B cell (primary cell): ENCODE measurements at regions of chr3 and their contacts with region 1.

Region 1: DNA sequence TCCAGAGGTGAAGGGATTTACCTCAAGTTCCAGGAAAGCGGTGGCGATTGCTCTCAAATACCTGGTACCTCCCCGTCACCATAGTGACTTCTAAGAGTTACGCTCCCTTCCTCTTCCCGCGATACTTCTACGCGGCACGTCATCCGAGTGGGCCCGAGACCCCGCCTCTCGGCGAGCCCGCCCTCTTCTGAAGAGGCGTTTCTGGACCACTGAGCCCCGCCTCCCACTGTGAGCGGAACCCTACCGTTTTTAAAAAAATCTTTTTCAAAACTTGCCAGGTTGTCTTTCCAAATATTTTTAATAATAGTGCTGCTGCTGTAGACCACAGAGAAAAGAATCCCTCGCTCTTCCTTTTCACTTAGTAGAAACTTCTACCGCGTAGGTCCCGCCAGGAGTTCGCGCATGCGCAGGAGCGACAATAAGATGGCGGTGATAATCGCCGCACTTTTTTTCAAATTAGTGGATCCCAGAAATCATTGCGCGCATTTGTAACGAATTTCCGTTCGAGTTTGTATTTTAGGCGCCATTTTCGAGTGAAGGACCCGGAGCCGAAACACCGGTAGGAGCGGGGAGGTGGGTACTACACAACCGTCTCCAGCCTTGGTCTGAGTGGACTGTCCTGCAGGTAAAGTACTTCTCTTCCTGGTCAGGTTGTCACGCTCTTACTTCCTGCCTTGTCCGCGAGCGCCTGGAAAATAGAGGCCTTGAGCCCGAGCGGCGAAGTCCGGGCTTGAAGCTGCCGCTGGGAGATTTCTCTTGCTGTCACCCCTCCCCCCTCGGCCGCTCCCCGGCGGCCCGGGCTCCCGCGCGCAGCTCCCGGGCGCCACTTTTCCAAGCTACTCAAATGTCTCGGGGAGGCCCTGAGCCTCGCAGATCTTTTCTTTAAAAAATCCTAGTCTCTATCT is at the starts of genes IFT80 and SMC4:
- DNase-seq: peak; percentile 97
- ATAC-seq: peak; percentile 96
- H3K4me3 ChIP-seq: peak within 1 kb of the TSS; percentile 71 to 97 (median 85)
- H3K4me3 Mint-ChIP-seq: peak within 1 kb of the TSS; percentile 98
- H3K27ac ChIP-seq: peak within 1 kb of the TSS; percentile 69 to 97
- H3K27ac Mint-ChIP-seq: peak within 1 kb of the TSS; percentile 98
- H3K4me1 ChIP-seq: peaks cover 26 to 45% of the 10 kb centered on the region in 2 donors
- H3K4me1 Mint-ChIP-seq: peaks cover 43% of the 10 kb centered on the region
- H3K27me3 ChIP-seq: peaks cover 0 to 25% (median 7%) of the 10 kb centered on the region in 4 experiments
- H3K27me3 Mint-ChIP-seq: no peaks in the 10 kb centered on the region
- CTCF ChIP-seq: no peak
- total RNA-seq, gene IFT80: 44.1 and 47.0 TPM in 2 replicates
- total RNA-seq, gene SMC4: 53.8 and 55.1 TPM in 2 replicates

Region 2: GRCh38 chr3:160012108-160012507 is 387.3 kb before region 1 on chr3:
- CTCF ChIA-PET with region 1: no interaction called
- POLR2A ChIA-PET with region 1: no interaction called
- intact Hi-C with region 1: loop called (anchors 5 kb)
- DNase-seq: peak; percentile 72
- ATAC-seq: peak; percentile 88
- H3K4me3 ChIP-seq: peak overlapping the region in 2 of 5 experiments; percentile 6 to 16
- H3K4me3 Mint-ChIP-seq: peak overlapping the region; percentile 33
- H3K27ac ChIP-seq: peak overlapping the region; percentile 81 to 90
- H3K27ac Mint-ChIP-seq: peak overlapping the region; percentile 75
- H3K4me1 ChIP-seq: peaks cover 25 to 33% of the 10 kb centered on the region in 2 donors
- H3K4me1 Mint-ChIP-seq: peaks cover 34% of the 10 kb centered on the region
- H3K27me3 ChIP-seq: no peaks in the 10 kb centered on the region
- H3K27me3 Mint-ChIP-seq: no peaks in the 10 kb centered on the region
- CTCF ChIP-seq: no peak

Region 3: GRCh38 chr3:160225176-160226025 is 174.0 kb before region 1 on chr3 and contains the start of gene C3orf80:
- CTCF ChIA-PET with region 1: no interaction called
- POLR2A ChIA-PET with region 1: no interaction called
- intact Hi-C with region 1: loop called (anchors 10 kb)
- DNase-seq: peak; percentile 65
- ATAC-seq: peak; percentile 75
- H3K4me3 ChIP-seq: peak within 1 kb of the TSS in 4 of 5 experiments; percentile 21 to 62 (median 42)
- H3K4me3 Mint-ChIP-seq: peak within 1 kb of the TSS; percentile 90
- H3K27ac ChIP-seq: no peak within 1 kb of the TSS
- H3K27ac Mint-ChIP-seq: no peak within 1 kb of the TSS
- H3K4me1 ChIP-seq: peaks cover 22 to 23% of the 10 kb centered on the region in 2 donors
- H3K4me1 Mint-ChIP-seq: peaks cover 21% of the 10 kb centered on the region
- H3K27me3 ChIP-seq: peaks cover 0 to 40% (median 34%) of the 10 kb centered on the region in 4 experiments
- H3K27me3 Mint-ChIP-seq: peaks cover 46% of the 10 kb centered on the region
- CTCF ChIP-seq: peak; percentile 29
- total RNA-seq, gene C3orf80: not detected in 2 replicates

Region 4: DNA sequence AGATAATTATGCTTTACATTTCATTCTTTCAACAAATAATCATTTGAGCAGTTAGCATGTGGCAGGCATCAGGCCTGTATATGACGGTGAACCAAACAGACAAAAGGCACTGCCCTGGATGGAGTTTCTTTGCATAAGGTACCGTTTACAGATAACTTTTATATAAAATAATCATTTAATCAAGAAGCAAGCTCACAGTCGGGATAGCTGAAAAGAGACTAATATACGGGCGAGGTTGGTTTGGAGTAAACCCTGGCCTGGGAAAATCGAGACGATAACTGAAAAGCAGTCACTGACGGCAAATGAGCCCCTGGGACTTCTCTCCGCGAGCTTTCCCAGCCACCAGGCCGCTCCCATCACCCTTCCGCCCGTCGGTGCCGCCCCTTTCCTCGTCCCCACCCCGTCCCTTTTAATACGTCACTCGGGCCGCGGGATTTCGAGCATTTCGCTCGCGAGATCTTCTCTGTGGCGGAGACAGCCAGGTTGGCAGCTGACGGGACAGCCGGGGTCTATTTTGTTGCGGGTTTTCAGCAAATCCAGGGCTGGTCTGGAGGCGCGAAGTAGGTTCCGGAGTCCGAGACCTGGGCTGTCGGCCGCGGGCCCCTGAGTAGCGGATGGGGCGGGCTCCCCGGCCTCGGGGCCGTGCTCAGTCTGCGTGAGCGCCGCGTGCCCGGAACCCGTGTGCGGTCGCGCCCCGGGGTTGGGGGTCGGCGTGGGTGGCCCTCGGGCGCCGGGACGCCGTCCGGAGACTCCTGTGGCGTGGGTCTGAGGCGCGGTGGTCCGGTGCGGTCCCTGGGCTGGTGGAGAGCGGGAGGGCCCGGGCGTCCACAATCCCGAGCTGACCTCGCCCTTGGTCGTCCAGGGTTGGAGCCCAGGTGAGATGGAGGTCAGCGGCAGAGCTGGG is 821.7 kb after region 1 on chr3 and contains the start of gene NMD3:
- CTCF ChIA-PET with region 1: no interaction called
- POLR2A ChIA-PET with region 1: no interaction called
- intact Hi-C with region 1: loop called (anchors 5 kb)
- DNase-seq: peak; percentile 93
- ATAC-seq: peak; percentile 95
- H3K4me3 ChIP-seq: peak within 1 kb of the TSS; percentile 70 to 95 (median 92)
- H3K4me3 Mint-ChIP-seq: peak within 1 kb of the TSS; percentile 94
- H3K27ac ChIP-seq: peak within 1 kb of the TSS; percentile 64 to 81
- H3K27ac Mint-ChIP-seq: peak within 1 kb of the TSS; percentile 94
- H3K4me1 ChIP-seq: peaks cover 22% of the 10 kb centered on the region in 2 donors
- H3K4me1 Mint-ChIP-seq: peaks cover 27% of the 10 kb centered on the region
- H3K27me3 ChIP-seq: peaks cover 0 to 5% (median 2%) of the 10 kb centered on the region in 4 experiments
- H3K27me3 Mint-ChIP-seq: peaks cover 10% of the 10 kb centered on the region
- CTCF ChIP-seq: no peak
- total RNA-seq, gene NMD3: 36.1 and 38.0 TPM in 2 replicates